Activated CD8-positive, alpha-beta memory T cell treated with anti-CD3 and anti-CD28 coated beads, Interleukin-2, amount 10 ng/mL, durations not matched to agents 7 days and 5 days (primary cell): ENCODE measurements at regions of chr12 and their contacts with region 1.

Region 1: DNA sequence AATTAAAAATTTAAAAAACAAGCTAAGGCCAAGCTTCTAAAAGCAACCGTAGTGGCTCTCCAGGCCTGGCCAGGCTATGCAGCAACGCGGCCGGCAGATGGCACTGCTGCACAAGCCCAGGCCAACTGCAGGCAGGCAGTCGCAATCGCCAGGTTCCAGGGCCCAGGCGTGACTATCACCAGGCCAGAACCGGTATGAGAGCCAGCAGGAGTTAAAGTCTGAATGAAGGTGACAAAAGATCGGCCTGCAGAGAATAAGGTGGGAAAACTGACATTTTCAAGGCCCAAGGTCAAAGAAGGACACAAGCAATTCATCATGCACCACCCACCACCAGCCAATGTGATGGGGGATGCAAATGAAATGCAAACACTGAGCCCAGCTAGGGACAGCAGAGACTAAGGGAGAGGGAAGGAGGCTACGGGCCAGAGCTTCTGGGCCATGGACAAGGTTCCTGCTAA is 43.6 kb upstream of the ANO2 start:
- DNase-seq: peak; percentile 80
- ATAC-seq: peak; percentile 96
- H3K4me3 Mint-ChIP-seq: no peak overlapping the region
- H3K27ac Mint-ChIP-seq: no peak overlapping the region
- H3K4me1 Mint-ChIP-seq: peaks cover 2% of the 10 kb centered on the region
- H3K27me3 Mint-ChIP-seq: peaks cover 4% of the 10 kb centered on the region

Region 2: GRCh38 chr12:5960783-5961182 is 27.9 kb before region 1 on chr12:
- CTCF ChIA-PET with region 1: no interaction called
- DNase-seq: no peak
- ATAC-seq: no peak
- H3K4me3 Mint-ChIP-seq: no peak overlapping the region
- H3K27ac Mint-ChIP-seq: no peak overlapping the region
- H3K4me1 Mint-ChIP-seq: peaks cover 1% of the 10 kb centered on the region
- H3K27me3 Mint-ChIP-seq: peaks cover 18% of the 10 kb centered on the region

Region 3: GRCh38 chr12:5977556-5977955 is 11.1 kb before region 1 on chr12:
- CTCF ChIA-PET with region 1: interaction called, 23 read pairs
- DNase-seq: no peak
- ATAC-seq: no peak
- H3K4me3 Mint-ChIP-seq: no peak overlapping the region
- H3K27ac Mint-ChIP-seq: no peak overlapping the region
- H3K4me1 Mint-ChIP-seq: no peaks in the 10 kb centered on the region
- H3K27me3 Mint-ChIP-seq: peaks cover 11% of the 10 kb centered on the region

Region 4: GRCh38 chr12:6026998-6027397 is 38.3 kb after region 1 on chr12:
- CTCF ChIA-PET with region 1: no interaction called
- DNase-seq: no peak
- ATAC-seq: no peak
- H3K4me3 Mint-ChIP-seq: no peak overlapping the region
- H3K27ac Mint-ChIP-seq: no peak overlapping the region
- H3K4me1 Mint-ChIP-seq: no peaks in the 10 kb centered on the region
- H3K27me3 Mint-ChIP-seq: peaks cover 22% of the 10 kb centered on the region

Region 5: DNA sequence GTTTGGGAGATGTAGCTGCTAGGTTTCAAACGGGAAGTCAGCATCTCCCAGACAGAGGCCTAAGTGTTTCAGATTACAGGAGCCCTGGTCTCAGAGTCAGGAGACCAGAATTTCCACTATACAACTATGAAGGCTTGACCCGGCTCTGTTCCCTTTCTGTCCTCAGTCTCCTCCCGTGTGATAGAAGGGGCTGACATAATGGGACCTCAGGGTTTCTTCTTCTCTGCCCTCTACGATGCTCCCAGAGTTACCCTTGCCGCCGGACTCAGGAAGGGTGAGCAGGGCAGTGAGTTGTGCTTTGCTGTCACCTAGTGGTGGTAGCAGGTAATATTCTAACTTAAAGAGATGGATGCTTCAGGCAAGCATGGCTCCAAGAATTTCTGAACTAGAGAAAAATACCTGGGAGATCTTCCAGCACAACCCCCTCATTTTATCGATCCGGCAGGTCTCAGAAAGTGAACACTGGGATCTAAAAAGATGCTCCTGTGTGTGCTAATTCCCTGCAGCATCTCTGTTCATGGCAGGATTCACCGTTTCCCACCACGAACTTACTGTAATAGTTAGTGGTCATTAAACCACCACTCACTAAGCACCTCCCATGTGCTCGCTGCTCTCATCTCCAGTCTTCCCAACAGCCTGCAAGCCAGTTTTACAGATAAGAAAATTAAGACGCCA is 51.3 kb after region 1 on chr12:
- CTCF ChIA-PET with region 1: interaction called, 111 read pairs
- DNase-seq: peak; percentile 67
- ATAC-seq: peak; percentile 84
- H3K4me3 Mint-ChIP-seq: no peak overlapping the region
- H3K27ac Mint-ChIP-seq: no peak overlapping the region
- H3K4me1 Mint-ChIP-seq: no peaks in the 10 kb centered on the region
- H3K27me3 Mint-ChIP-seq: peaks cover 3% of the 10 kb centered on the region

Region 6: GRCh38 chr12:6278439-6279255 is 290.0 kb after region 1 on chr12:
- CTCF ChIA-PET with region 1: interaction called, 28 read pairs
- DNase-seq: peak; percentile 85
- ATAC-seq: peak; percentile 98
- H3K4me3 Mint-ChIP-seq: peak overlapping the region; percentile 61
- H3K27ac Mint-ChIP-seq: peak overlapping the region; percentile 21
- H3K4me1 Mint-ChIP-seq: peaks cover 3% of the 10 kb centered on the region
- H3K27me3 Mint-ChIP-seq: peaks cover 52% of the 10 kb centered on the region

Region 7: DNA sequence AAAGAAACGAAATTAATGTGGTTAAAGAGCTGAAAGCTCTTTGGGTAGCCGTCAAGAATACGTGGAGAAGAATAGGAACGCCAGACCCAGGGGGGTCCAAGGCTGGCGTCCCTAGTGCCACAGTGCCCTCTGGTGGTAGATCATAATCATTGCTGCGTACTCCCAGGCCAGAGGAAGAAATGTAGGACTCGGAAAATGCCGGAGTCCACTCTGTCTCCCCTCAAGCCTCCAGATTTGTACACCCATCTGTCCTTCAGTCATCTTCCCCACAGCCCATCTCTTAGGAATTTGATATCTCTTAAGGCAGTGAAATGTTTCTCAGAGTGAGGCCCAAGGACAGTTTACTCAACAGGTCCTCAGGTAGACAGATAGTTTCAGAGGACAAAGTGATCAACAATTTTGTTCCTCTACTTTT is 296.4 kb after region 1 on chr12:
- CTCF ChIA-PET with region 1: interaction called, 28 read pairs
- DNase-seq: peak; percentile 71
- ATAC-seq: peak; percentile 92
- H3K4me3 Mint-ChIP-seq: no peak overlapping the region
- H3K27ac Mint-ChIP-seq: no peak overlapping the region
- H3K4me1 Mint-ChIP-seq: peaks cover 2% of the 10 kb centered on the region
- H3K27me3 Mint-ChIP-seq: peaks cover 23% of the 10 kb centered on the region

Region 8: GRCh38 chr12:6340032-6340638 is 351.4 kb after region 1 on chr12:
- CTCF ChIA-PET with region 1: no interaction called
- DNase-seq: no peak
- ATAC-seq: no peak
- H3K4me3 Mint-ChIP-seq: no peak overlapping the region
- H3K27ac Mint-ChIP-seq: no peak overlapping the region
- H3K4me1 Mint-ChIP-seq: peaks cover 39% of the 10 kb centered on the region
- H3K27me3 Mint-ChIP-seq: no peaks in the 10 kb centered on the region